Caco-2 (cell line): ENCODE measurements at regions of chr3 and their contacts with region 1.

Region 1: DNA sequence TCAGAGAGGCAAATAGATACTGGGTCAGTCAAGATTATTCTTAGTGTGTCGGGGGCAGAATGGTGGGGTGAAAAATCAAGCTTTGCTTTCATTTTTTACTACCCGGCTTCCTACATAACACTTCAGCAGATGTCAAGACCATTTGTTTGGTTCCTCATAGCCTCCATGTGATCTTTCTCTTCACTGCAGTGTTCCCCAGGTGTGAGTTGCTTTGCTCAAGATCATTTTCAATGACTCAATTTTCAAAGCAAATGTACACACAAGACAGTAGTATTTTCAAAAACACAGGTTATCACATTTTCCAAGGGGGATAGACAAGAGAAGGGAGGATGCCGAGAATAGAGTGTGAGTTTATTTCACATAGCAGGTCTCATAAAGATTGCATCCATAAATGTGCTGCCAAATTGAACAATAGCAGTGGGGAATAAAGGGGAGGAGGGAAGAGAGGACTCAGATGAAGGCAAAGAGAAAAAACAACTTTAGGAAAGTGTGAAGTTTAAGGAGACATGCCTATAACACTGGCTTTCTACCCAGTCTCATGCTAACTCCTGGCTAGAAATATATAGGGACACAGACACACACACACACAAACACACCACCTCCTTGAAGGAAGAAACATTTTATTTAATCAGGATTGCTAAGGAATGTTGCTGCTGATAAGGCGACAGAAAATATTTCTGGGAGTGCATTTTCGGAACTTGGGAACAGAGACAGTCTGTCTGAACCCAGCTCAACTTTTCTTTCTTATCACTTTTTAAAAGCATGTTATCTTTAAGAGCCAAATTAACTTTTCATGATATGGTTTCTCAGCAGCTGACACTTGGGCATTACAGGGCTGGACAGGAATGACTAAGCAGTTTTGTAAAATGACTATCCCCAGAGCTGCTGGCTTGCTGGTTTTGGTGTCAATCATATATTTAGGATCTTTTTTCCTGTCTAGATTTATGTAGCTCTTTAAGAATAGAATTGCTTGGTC is 402.4 kb downstream of the RBMS3 start:
- DNase-seq: peak; percentile 71 to 72
- H3K4me3 ChIP-seq: no peak overlapping the region
- H3K4me3 Mint-ChIP-seq: peak overlapping the region; percentile 3
- H3K27ac Mint-ChIP-seq: peak overlapping the region; percentile 66
- H3K4me1 ChIP-seq: peaks cover 57% of the 10 kb centered on the region
- H3K4me1 Mint-ChIP-seq: peaks cover 24% of the 10 kb centered on the region
- H3K27me3 ChIP-seq: no peaks in the 10 kb centered on the region
- H3K27me3 Mint-ChIP-seq: no peaks in the 10 kb centered on the region
- CTCF ChIP-seq: no peak

Region 2: GRCh38 chr3:29212789-29213433 is 470.4 kb before region 1 on chr3:
- CTCF ChIA-PET with region 1: no interaction called
- POLR2A ChIA-PET with region 1: no interaction called
- intact Hi-C with region 1: loop called (anchors 1 kb)
- DNase-seq: no peak
- H3K4me3 ChIP-seq: no peak overlapping the region
- H3K4me3 Mint-ChIP-seq: no peak overlapping the region
- H3K27ac Mint-ChIP-seq: peak overlapping the region; percentile 48
- H3K4me1 ChIP-seq: peaks cover 12% of the 10 kb centered on the region; the same call in 1 of the 2 replicates
- H3K4me1 Mint-ChIP-seq: no peaks in the 10 kb centered on the region
- H3K27me3 ChIP-seq: no peaks in the 10 kb centered on the region
- H3K27me3 Mint-ChIP-seq: no peaks in the 10 kb centered on the region
- CTCF ChIP-seq: no peak

Region 3: DNA sequence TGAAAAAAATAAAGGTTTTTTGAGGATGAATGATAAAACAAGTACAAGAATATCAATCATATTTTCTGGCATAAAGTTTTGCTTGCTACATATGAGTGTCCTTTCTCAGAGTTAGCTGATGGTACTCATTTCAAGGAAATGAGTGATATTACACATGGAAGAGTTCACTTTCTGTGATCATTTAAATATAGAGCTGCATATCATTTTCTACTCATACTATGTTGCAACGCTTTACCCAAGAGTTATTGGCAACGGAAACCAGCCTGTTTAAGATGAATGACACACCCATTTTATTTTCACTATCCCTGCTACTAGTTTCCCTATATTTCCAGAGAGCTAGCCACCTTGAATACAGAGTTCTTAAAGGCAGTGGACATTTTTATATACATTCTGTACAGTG is 437.9 kb before region 1 on chr3:
- CTCF ChIA-PET with region 1: no interaction called
- POLR2A ChIA-PET with region 1: no interaction called
- intact Hi-C with region 1: no loop called
- DNase-seq: no peak
- H3K4me3 ChIP-seq: no peak overlapping the region
- H3K4me3 Mint-ChIP-seq: no peak overlapping the region
- H3K27ac Mint-ChIP-seq: no peak overlapping the region
- H3K4me1 ChIP-seq: no peaks in the 10 kb centered on the region
- H3K4me1 Mint-ChIP-seq: peaks cover 2% of the 10 kb centered on the region
- H3K27me3 ChIP-seq: no peaks in the 10 kb centered on the region
- H3K27me3 Mint-ChIP-seq: no peaks in the 10 kb centered on the region
- CTCF ChIP-seq: no peak

Region 4: DNA sequence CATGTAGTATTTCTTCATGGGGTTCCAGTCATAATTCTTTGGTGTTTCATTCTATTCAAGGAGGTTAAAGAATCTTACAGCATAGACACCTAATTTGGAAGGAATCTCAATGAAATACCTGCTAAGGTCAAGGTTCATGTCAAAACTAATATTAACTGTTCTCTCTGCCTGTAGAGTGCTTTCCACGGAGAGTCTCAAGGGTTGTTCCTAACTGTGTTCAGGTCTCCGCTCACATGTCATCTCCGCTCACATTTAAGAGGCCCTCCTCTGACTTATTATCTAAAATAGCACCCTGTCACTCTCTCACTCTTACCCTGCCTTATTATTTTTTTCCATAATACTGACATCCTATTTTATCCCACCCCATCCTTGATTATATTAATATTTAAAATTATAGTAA is 162.5 kb before region 1 on chr3:
- CTCF ChIA-PET with region 1: no interaction called
- POLR2A ChIA-PET with region 1: no interaction called
- intact Hi-C with region 1: loop called (anchors 1 kb)
- DNase-seq: no peak
- H3K4me3 ChIP-seq: no peak overlapping the region
- H3K4me3 Mint-ChIP-seq: no peak overlapping the region
- H3K27ac Mint-ChIP-seq: no peak overlapping the region
- H3K4me1 ChIP-seq: peaks cover 19% of the 10 kb centered on the region
- H3K4me1 Mint-ChIP-seq: peaks cover 26% of the 10 kb centered on the region
- H3K27me3 ChIP-seq: no peaks in the 10 kb centered on the region
- H3K27me3 Mint-ChIP-seq: no peaks in the 10 kb centered on the region
- CTCF ChIP-seq: no peak

Region 5: DNA sequence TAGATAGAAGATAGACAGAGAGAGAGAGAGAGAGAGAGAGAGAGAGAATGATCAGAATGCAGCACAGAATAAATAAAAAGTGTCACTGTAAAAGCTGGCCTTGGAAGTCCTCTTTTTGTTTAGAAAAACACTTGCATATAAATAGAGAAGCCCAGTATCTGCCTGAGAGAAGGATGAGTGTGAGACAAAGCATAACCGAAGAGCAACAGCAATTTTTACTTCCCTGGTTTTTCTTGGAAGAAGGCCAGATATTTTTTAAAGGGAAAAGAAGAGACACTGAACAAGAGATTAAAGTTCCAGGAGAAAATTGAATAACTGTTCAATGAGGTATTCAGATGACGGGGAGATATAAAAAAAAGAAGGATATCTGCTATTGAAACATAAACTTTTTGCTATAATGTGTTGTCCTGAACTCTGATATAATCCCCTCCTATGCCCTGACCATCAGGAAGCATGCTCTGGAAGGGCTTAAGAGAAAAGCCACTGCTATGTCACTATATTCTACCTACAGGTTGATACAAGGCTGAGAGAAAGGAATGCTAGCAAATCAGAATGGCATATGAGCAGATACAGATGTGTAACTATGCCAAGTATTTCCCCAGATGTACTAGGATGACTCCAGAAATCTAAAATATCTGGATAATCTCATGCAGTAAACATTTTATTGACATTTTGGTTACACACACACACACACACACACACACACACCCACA is 43.6 kb before region 1 on chr3:
- CTCF ChIA-PET with region 1: no interaction called
- POLR2A ChIA-PET with region 1: no interaction called
- intact Hi-C with region 1: no loop called
- DNase-seq: peak in 1 of 2 experiments; percentile 2
- H3K4me3 ChIP-seq: no peak overlapping the region
- H3K4me3 Mint-ChIP-seq: no peak overlapping the region
- H3K27ac Mint-ChIP-seq: no peak overlapping the region
- H3K4me1 ChIP-seq: no peaks in the 10 kb centered on the region
- H3K4me1 Mint-ChIP-seq: peaks cover 13% of the 10 kb centered on the region
- H3K27me3 ChIP-seq: no peaks in the 10 kb centered on the region
- H3K27me3 Mint-ChIP-seq: no peaks in the 10 kb centered on the region
- CTCF ChIP-seq: no peak

Region 6: DNA sequence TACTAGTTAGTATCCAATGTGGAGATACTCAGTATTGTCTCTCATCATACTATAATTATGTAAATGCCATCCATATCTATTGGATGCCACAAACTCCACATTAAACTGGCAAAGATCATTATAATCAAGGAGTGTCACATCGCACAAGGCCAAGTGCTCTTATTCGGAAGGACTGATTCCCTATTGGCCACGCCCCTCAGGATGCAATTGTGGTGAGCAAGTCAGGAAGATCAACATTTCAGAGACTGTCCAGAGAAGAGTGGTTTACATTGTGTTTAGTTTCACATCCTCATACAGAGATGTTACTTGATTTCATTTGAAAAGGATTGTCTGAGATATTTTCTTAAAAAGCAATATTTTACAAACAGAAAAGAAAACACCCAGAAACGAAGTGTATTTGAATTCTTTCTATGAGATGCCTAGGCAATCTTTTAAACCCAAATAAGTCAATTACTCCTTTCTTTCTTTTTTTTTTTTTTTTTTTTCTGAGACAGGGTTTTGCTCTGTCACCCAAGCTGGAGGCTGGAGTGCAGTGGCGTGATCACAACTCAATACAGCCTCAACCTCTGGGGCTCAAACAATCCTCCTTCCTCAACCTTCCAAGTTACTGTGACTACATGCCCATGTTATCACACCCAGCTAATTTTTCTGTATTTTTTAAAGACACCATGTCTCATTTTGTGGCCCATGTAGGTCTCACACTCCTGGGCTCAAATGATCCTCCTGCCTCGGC is 33.3 kb before region 1 on chr3:
- CTCF ChIA-PET with region 1: no interaction called
- POLR2A ChIA-PET with region 1: no interaction called
- intact Hi-C with region 1: no loop called
- DNase-seq: no peak
- H3K4me3 ChIP-seq: no peak overlapping the region
- H3K4me3 Mint-ChIP-seq: no peak overlapping the region
- H3K27ac Mint-ChIP-seq: no peak overlapping the region
- H3K4me1 ChIP-seq: no peaks in the 10 kb centered on the region
- H3K4me1 Mint-ChIP-seq: no peaks in the 10 kb centered on the region
- H3K27me3 ChIP-seq: no peaks in the 10 kb centered on the region
- H3K27me3 Mint-ChIP-seq: no peaks in the 10 kb centered on the region
- CTCF ChIP-seq: no peak

Region 7: DNA sequence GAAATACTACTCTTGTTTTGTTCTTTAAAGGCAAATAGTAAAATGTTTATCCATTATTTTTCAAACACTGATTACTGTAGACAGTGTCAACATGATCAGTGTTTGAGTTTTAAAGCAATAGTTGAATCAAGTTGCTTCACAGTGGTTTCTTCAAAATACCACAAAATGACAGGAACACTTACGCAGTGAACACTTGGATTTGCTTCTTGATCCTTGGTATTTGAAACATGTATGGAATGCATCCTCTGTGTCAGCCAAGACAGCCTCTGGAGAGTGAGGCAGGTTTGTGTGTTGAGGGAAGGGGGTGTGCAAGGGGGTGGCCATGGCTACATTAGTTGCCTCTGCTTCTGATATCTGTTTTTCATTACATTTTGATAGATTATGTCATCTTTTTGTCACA is 10.6 kb after region 1 on chr3:
- CTCF ChIA-PET with region 1: no interaction called
- POLR2A ChIA-PET with region 1: no interaction called
- intact Hi-C with region 1: loop called (anchors 1 kb)
- DNase-seq: peak; percentile 62 to 80
- H3K4me3 ChIP-seq: no peak overlapping the region
- H3K4me3 Mint-ChIP-seq: no peak overlapping the region
- H3K27ac Mint-ChIP-seq: peak overlapping the region; percentile 90
- H3K4me1 ChIP-seq: peaks cover 54% of the 10 kb centered on the region
- H3K4me1 Mint-ChIP-seq: peaks cover 20% of the 10 kb centered on the region
- H3K27me3 ChIP-seq: no peaks in the 10 kb centered on the region
- H3K27me3 Mint-ChIP-seq: no peaks in the 10 kb centered on the region
- CTCF ChIP-seq: no peak